ENCODE measurements at regions of chr1 and their contacts with region 1.

Region 1: GRCh38 chr1:169106095-169106920 is at the start of gene ATP1B1:
- DNase-seq: no peak
- ATAC-seq: peak; percentile 94
- H3K4me3 ChIP-seq: peak within 1 kb of the TSS; percentile 86
- H3K27ac ChIP-seq: no peak within 1 kb of the TSS
- H3K4me1 ChIP-seq: peaks cover 3% of the 10 kb centered on the region; the same call in 1 of the 2 replicates
- H3K27me3 ChIP-seq: peaks cover 2 to 6% of the 10 kb centered on the region in 2 experiments; a peak in 2 of 4 replicates
- CTCF ChIP-seq: peak in 2 of 3 experiments; percentile 21 to 36; a peak in 3 of 6 replicates
- EP300 ChIP-seq: no peak
- POLR2A ChIP-seq: peak; percentile 84
- RAD21 ChIP-seq: no peak
- polyA plus RNA-seq, gene ATP1B1: 0.84 to 0.90 TPM

Region 2: DNA sequence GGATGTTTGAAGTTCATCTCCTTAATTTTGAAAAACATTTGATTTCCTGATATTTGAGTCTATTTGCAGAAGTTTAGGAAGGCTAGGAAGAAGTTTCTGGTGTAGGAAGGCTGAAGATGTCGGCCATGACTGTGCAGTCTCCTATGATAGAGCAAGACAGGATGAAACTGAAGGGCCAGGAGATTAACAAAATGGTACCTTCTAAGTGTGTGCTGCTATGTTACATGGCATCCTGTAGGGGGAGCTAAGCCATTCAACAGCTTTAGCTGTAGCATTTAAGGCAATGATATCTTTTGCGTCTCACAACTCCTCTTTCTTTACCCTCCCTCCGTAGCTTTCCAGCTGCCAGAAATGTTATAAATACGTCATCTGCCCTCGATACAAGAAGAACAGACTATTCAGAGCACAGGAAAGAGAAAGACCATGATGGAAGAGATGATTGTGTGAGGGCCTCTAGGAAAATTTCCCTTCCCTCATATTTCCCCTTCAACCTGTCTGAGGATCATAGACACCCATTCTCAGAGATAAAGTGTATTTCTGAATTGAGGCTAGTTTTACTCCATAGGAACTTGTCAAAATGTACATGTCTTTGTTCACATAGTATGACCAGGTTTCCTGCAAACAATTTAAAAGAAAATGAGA is 468.8 kb before region 1 on chr1:
- CTCF ChIA-PET with region 1: interaction called, 55 read pairs
- POLR2A ChIA-PET with region 1: no interaction called
- RAD21 ChIA-PET with region 1: interaction called, 53 read pairs
- SMC1A ChIA-PET with region 1: interaction called, 52 read pairs
- in situ Hi-C with region 1: no loop called
- intact Hi-C with region 1: loop called (anchors 2 kb)
- DNase-seq: no peak
- ATAC-seq: peak; percentile 92
- H3K4me3 ChIP-seq: no peak overlapping the region
- H3K27ac ChIP-seq: no peak overlapping the region
- H3K4me1 ChIP-seq: no peaks in the 10 kb centered on the region
- H3K27me3 ChIP-seq: no peaks in the 10 kb centered on the region
- CTCF ChIP-seq: peak; percentile 64 to 80 (median 73)
- EP300 ChIP-seq: no peak
- POLR2A ChIP-seq: no peak
- RAD21 ChIP-seq: peak; percentile 65

Region 3: GRCh38 chr1:168734946-168735345 is 371.4 kb before region 1 on chr1:
- CTCF ChIA-PET with region 1: interaction called, 20 read pairs
- POLR2A ChIA-PET with region 1: no interaction called
- RAD21 ChIA-PET with region 1: interaction called, 4 read pairs
- SMC1A ChIA-PET with region 1: interaction called, 24 read pairs
- in situ Hi-C with region 1: no loop called
- intact Hi-C with region 1: no loop called
- DNase-seq: no peak
- ATAC-seq: no peak
- H3K4me3 ChIP-seq: no peak overlapping the region
- H3K27ac ChIP-seq: no peak overlapping the region
- H3K4me1 ChIP-seq: no peaks in the 10 kb centered on the region
- H3K27me3 ChIP-seq: peaks cover 0 to 3% of the 10 kb centered on the region in 2 experiments; a peak in 2 of 4 replicates
- CTCF ChIP-seq: peak in 1 of 3 experiments; percentile 25; a peak in 1 of 6 replicates
- EP300 ChIP-seq: no peak
- POLR2A ChIP-seq: no peak
- RAD21 ChIP-seq: peak; percentile 36; the same call in 1 of the 2 replicates

Region 4: GRCh38 chr1:168861421-168862004 is 244.8 kb before region 1 on chr1:
- CTCF ChIA-PET with region 1: no interaction called
- POLR2A ChIA-PET with region 1: no interaction called
- RAD21 ChIA-PET with region 1: no interaction called
- SMC1A ChIA-PET with region 1: no interaction called
- in situ Hi-C with region 1: no loop called
- intact Hi-C with region 1: no loop called
- DNase-seq: no peak
- ATAC-seq: no peak
- H3K4me3 ChIP-seq: no peak overlapping the region
- H3K27ac ChIP-seq: no peak overlapping the region
- H3K4me1 ChIP-seq: no peaks in the 10 kb centered on the region
- H3K27me3 ChIP-seq: no peaks in the 10 kb centered on the region
- CTCF ChIP-seq: no peak
- EP300 ChIP-seq: no peak
- POLR2A ChIP-seq: no peak
- RAD21 ChIP-seq: no peak

Region 5: DNA sequence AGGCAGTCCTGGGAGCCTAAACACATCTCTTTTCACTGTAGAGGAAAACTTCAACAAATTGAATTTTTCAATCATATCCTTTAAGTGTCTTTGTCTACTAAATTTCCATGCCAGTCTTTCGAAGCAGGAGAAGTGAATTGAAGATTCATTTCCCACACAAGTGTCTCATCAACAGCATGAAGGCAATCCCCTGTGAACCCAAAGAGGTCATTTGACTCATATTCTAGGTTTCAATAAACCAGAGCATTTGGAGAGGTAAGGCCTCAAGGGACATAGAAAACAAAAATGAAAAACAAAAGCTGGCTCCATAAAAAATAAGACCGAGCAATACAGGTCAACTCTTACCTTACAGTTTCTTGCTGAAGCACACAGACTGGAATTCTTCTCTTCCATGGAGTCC is 93.9 kb before region 1 on chr1:
- CTCF ChIA-PET with region 1: interaction called, 3 read pairs
- POLR2A ChIA-PET with region 1: interaction called, 3 read pairs
- RAD21 ChIA-PET with region 1: interaction called, 26 read pairs
- SMC1A ChIA-PET with region 1: interaction called, 10 read pairs
- in situ Hi-C with region 1: no loop called
- intact Hi-C with region 1: loop called (anchors 5 kb)
- DNase-seq: peak; percentile 73
- ATAC-seq: peak; percentile 82
- H3K4me3 ChIP-seq: no peak overlapping the region
- H3K27ac ChIP-seq: peak overlapping the region; percentile 54
- H3K4me1 ChIP-seq: peaks cover 21% of the 10 kb centered on the region
- H3K27me3 ChIP-seq: no peaks in the 10 kb centered on the region
- CTCF ChIP-seq: no peak
- EP300 ChIP-seq: peak; percentile 43 to 86; a peak in 2 of 4 replicates
- POLR2A ChIP-seq: no peak
- RAD21 ChIP-seq: no peak

Region 6: GRCh38 chr1:169044296-169044695 is 62.0 kb before region 1 on chr1:
- CTCF ChIA-PET with region 1: interaction called, 100 read pairs
- POLR2A ChIA-PET with region 1: interaction called, 69 read pairs
- RAD21 ChIA-PET with region 1: interaction called, 135 read pairs
- SMC1A ChIA-PET with region 1: interaction called, 131 read pairs
- in situ Hi-C with region 1: no loop called
- intact Hi-C with region 1: loop called (anchors 5 kb)
- DNase-seq: peak; percentile 76
- ATAC-seq: peak; percentile 94
- H3K4me3 ChIP-seq: no peak overlapping the region
- H3K27ac ChIP-seq: peak overlapping the region; percentile 45
- H3K4me1 ChIP-seq: peaks cover 47% of the 10 kb centered on the region
- H3K27me3 ChIP-seq: no peaks in the 10 kb centered on the region
- CTCF ChIP-seq: no peak
- EP300 ChIP-seq: peak in 1 of 2 experiments; percentile 28; a peak in 1 of 4 replicates
- POLR2A ChIP-seq: no peak
- RAD21 ChIP-seq: no peak

Region 7: DNA sequence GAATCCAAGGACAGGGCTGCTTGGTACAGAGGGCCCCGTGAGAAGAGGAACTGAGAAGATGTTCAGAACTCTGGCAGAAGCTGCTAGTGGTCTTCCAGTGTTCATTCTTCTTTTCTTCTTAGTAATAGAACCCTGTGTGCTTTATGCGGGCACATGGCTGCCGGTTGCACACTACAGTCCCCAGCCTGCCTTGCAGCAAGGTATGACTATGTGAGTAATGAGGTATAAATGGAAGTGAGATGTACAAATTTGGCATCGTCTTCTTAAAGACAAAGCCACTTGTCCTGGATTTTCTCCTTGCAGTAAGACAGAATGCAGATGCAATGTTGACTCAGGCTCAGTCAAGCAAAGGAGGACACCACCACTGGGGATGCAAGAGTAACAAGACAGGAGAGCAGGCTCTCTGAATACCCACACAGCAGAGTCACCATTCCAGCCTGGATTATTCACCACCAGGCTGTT is 14.8 kb before region 1 on chr1:
- CTCF ChIA-PET with region 1: interaction called, 19 read pairs
- POLR2A ChIA-PET with region 1: interaction called, 7 read pairs
- RAD21 ChIA-PET with region 1: interaction called, 10 read pairs
- SMC1A ChIA-PET with region 1: interaction called, 188 read pairs
- in situ Hi-C with region 1: no loop called
- intact Hi-C with region 1: no loop called
- DNase-seq: no peak
- ATAC-seq: peak; percentile 91
- H3K4me3 ChIP-seq: no peak overlapping the region
- H3K27ac ChIP-seq: peak overlapping the region; percentile 50
- H3K4me1 ChIP-seq: peaks cover 20% of the 10 kb centered on the region
- H3K27me3 ChIP-seq: no peaks in the 10 kb centered on the region
- CTCF ChIP-seq: no peak
- EP300 ChIP-seq: no peak
- POLR2A ChIP-seq: no peak
- RAD21 ChIP-seq: no peak

Region 8: DNA sequence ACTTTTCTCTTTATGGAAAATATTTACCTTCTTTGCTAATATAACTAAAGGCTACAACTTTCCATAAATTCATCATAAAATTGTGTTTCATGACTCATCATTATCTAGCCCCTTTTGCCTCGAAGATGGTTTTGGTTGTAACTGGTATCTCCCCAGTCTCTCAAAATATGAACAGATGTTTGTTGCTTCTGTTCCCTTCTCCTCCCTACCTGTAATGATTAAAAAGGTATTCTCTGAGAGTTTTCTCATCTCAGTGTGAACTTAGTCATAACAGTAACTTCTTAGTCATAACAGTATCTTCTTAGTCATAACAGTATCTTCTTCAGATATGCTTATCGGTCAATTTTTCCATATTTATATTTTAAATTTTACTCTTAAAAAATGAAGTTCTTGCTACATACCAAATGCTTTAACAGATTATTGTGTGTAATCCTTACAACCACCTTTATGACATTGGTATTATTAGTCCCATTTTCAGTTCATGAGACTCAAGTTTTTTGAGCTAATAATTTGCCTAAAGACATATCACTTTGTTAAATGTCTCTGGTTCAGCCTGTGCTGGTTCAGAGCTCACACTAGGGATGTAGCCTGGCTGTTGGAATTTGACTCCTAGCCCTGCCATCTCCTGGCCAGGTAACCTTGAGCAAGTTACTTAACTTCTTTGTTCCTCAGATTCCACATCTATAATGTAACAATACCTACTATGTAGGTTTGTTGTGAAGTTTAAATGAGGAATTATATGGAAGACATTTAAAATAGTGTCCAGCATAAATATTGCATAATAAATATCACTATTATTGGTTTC is 32.8 kb after region 1 on chr1:
- CTCF ChIA-PET with region 1: interaction called, 14 read pairs
- POLR2A ChIA-PET with region 1: no interaction called
- RAD21 ChIA-PET with region 1: interaction called, 15 read pairs
- SMC1A ChIA-PET with region 1: interaction called, 32 read pairs
- in situ Hi-C with region 1: no loop called
- intact Hi-C with region 1: no loop called
- DNase-seq: peak; percentile 55
- ATAC-seq: peak; percentile 96
- H3K4me3 ChIP-seq: no peak overlapping the region
- H3K27ac ChIP-seq: no peak overlapping the region
- H3K4me1 ChIP-seq: peaks cover 3% of the 10 kb centered on the region; the same call in 1 of the 2 replicates
- H3K27me3 ChIP-seq: no peaks in the 10 kb centered on the region
- CTCF ChIP-seq: no peak
- EP300 ChIP-seq: peak; percentile 86 to 89
- POLR2A ChIP-seq: no peak
- RAD21 ChIP-seq: no peak